Gastrocnemius medialis (tissue), 4 donors: ENCODE measurements at regions of chr17 and their contacts with region 1.

Region 1: GRCh38 chr17:47099987-47100711 is 88.9 kb downstream of the CDC27 start:
- DNase-seq: peak; percentile 89 to 94
- ATAC-seq: peak; percentile 99 to 100
- H3K4me3 ChIP-seq: peak overlapping the region; percentile 75 to 97 (median 90)
- H3K27ac ChIP-seq: peak overlapping the region; percentile 64 to 89 (median 81)
- H3K4me1 ChIP-seq: peaks cover 9 to 11% of the 10 kb centered on the region in 2 donors
- H3K27me3 ChIP-seq: no peaks in the 10 kb centered on the region
- CTCF ChIP-seq: peak in 3 of 5 experiments; percentile 21 to 30 (median 25)
- POLR2A ChIP-seq: peak; percentile 11 to 27

Region 2: GRCh38 chr17:46865100-46865499 is 235.0 kb before region 1 on chr17:
- in situ Hi-C with region 1: no loop called
- intact Hi-C with region 1: no loop called
- DNase-seq: no peak
- ATAC-seq: no peak
- H3K4me3 ChIP-seq: no peak overlapping the region
- H3K27ac ChIP-seq: no peak overlapping the region
- H3K4me1 ChIP-seq: no peaks in the 10 kb centered on the region
- H3K27me3 ChIP-seq: peaks cover 0 to 3% (median 2%) of the 10 kb centered on the region in 3 donors
- CTCF ChIP-seq: no peak
- POLR2A ChIP-seq: no peak

Region 3: GRCh38 chr17:47066841-47067682 is 33.1 kb before region 1 on chr17:
- in situ Hi-C with region 1: no loop called
- intact Hi-C with region 1: loop called (anchors 1 kb)
- DNase-seq: peak; percentile 68 to 81
- ATAC-seq: peak; percentile 97 to 98
- H3K4me3 ChIP-seq: peak overlapping the region; percentile 63 to 98 (median 78)
- H3K27ac ChIP-seq: peak overlapping the region; percentile 88 to 94 (median 90)
- H3K4me1 ChIP-seq: peaks cover 5 to 7% of the 10 kb centered on the region in 2 donors
- H3K27me3 ChIP-seq: no peaks in the 10 kb centered on the region
- CTCF ChIP-seq: peak in 4 of 5 experiments; percentile 5 to 34 (median 17)
- POLR2A ChIP-seq: peak in 1 of 2 donors; percentile 58